Psoas muscle (tissue), 8 donors: ENCODE measurements at regions of chr12 and their contacts with region 1.

Region 1: DNA sequence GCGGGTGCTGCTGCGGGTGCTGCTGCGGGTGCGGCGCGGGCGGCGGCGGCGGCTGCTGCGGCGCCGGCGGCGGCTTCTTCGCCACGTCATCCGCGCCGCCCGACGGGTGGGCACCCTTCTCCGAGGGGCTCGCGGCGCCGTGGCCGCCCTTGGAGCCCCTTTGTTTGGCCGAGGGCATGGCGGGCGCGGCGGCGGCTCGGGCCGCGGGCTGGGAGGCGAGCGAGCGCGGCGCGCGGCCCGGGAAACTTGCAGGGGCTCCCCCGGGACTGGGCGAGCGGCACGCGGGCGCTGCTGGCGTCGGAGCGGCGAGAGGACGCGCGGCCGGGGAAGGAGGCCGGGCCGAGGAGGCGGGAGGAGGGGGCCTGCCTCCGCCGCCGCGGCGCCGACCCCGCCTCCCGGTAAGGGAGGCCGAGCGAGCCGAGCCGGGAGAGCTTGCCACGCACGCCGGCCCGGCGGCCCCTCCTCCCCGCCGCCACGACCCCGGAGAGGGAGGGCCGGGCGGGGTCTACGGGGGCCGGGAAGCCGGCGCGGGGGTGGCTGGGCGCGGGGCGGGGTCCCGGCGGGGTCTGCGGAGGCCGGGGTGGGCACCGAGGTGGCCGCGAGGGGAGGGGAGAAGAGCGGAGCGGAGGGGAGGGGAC is at the start of gene CKAP4:
- DNase-seq: peak; percentile 82 to 88
- ATAC-seq: peak; percentile 68 to 73 (median 70)
- H3K4me3 ChIP-seq: peak within 1 kb of the TSS; percentile 74
- H3K27ac ChIP-seq: peak within 1 kb of the TSS; percentile 95
- H3K4me1 ChIP-seq: peaks cover 38% of the 10 kb centered on the region
- H3K27me3 ChIP-seq: no peaks in the 10 kb centered on the region
- CTCF ChIP-seq: no peak
- total RNA-seq, gene CKAP4: 14.2 to 24.4 (median 19.7) TPM

Region 2: GRCh38 chr12:106291342-106291741 is 43.5 kb after region 1 on chr12:
- intact Hi-C with region 1: loop called in 1 of 2 experiments (anchors 5 kb)
- DNase-seq: no peak
- ATAC-seq: no peak
- H3K4me3 ChIP-seq: no peak overlapping the region
- H3K27ac ChIP-seq: no peak overlapping the region
- H3K4me1 ChIP-seq: peaks cover 4% of the 10 kb centered on the region
- H3K27me3 ChIP-seq: no peaks in the 10 kb centered on the region
- CTCF ChIP-seq: no peak

Region 3: DNA sequence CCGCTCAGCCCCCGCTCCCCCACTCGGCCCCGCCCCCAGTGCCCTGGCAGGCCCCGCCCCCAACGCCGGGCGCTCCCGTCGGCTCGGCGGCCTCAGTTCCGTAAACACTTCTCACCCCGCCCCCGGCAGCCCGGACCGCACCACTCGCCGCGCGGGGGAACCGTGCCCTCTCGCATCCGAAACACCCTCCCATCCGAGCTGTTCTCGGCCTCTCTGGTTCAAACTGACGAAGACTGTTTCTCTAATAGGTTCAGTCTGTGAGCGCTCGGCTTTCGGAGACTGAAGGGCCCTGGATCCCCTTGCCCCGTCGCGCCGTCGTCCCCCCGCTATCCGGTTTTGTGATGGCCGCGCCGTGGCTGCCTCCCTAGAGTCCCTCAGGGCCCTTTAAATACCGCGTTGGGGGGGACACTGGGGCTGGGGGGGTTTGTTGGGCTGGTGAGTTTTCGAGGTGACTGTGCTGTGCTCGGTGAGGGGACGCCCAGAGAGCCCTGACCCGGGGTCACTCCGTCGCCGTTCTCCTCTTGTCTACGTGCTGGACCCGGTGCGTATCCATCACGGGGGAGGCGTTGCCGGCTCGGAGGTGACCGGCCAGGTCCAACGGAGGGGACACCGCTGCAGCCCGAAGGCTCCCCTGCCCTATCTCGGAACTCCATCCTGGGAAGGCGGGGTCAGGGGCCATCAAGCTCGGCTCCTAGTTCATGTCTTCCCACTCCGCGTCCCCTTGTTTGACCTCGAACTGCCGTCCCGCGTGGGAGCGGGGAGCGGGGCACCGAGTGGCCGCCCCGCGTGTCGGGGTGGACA is 54.8 kb after region 1 on chr12 and contains the start of gene TCP11L2:
- intact Hi-C with region 1: loop called (anchors 5 kb)
- DNase-seq: peak; percentile 91 to 94
- ATAC-seq: peak; percentile 79 to 90 (median 84)
- H3K4me3 ChIP-seq: peak within 1 kb of the TSS; percentile 86
- H3K27ac ChIP-seq: peak within 1 kb of the TSS; percentile 97
- H3K4me1 ChIP-seq: peaks cover 70% of the 10 kb centered on the region
- H3K27me3 ChIP-seq: no peaks in the 10 kb centered on the region
- CTCF ChIP-seq: no peak
- total RNA-seq, gene TCP11L2: 26.7 to 63.1 (median 39.0) TPM